AG04449 (cell line): ENCODE measurements at regions of chr10 and their contacts with region 1.

Region 1: DNA sequence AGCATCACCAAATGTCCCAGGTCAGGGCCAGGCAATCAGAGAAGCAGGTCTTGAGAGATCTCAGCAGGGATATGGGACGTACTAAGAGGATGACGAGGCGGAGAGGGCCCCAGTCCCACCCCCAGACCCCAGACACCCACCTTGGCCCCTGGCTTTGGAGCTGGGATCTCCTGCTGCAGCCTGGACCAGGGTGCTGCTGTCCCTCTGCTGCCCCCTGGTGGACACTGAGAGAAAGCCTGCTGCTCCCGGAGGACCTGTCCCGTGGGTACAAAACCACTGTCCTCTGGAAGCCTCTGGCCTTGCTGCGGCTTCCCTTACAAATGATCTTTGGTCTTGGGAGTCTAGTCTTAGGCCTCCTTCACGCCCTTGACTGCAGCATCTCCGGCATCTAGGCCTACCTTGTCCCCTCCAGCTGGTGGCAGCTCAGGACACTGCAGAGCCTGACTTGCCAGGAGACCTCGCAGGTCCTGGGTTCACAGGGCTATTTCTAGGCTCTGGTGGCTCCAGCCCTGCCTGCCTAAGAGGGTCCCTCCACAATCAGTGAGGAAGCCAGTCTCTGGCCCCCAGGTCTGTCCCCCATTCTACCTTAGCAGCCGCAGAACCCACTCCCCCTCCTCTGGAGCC is 97.1 kb downstream of the RGS10 start:
- DNase-seq: peak; percentile 16
- H3K4me3 ChIP-seq: no peak overlapping the region
- CTCF ChIP-seq: peak; percentile 93

Region 2: GRCh38 chr10:119416855-119417254 is 28.6 kb before region 1 on chr10:
- CTCF ChIA-PET with region 1: interaction called, 30 read pairs
- POLR2A ChIA-PET with region 1: no interaction called
- DNase-seq: no peak
- H3K4me3 ChIP-seq: no peak overlapping the region
- CTCF ChIP-seq: peak; percentile 84

Region 3: DNA sequence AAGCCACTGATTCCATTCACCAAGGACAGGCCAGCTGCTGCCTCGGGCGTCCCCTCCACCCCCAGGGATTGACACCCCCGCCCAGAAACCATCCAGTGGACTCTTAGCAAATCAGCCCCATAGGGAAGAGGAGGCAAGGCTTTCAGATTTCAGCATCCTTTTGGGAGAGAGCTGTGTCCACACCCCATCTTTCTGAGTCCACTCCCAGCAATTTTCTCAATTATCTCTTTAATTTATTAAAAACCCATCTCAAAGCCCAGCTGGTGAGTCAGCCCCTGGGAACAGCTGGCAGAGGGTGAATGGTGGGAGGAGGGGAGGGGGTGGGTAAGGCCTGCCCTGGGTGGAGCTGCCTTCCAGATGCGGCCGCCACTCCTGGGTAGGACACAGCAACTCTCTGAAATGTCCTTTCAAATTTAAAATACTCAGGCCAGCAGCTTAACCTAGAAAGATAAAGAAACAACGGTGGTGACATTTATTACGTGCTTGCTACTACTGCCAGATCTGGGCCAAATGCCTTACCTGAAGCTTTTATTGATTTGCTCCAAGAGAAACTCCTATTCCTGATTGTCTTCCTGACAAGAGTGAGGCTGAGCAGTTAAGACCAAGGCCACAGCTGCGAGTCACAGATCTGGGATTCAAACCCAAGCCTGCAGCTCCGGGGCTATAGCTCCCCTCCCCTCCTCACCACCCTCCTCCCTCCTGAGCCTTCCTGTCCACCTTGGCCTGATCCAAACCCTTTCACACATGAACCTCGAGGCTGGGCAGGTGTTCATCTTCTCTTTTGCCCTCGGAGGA is 23.3 kb before region 1 on chr10:
- CTCF ChIA-PET with region 1: interaction called, 30 read pairs
- POLR2A ChIA-PET with region 1: no interaction called
- DNase-seq: no peak
- H3K4me3 ChIP-seq: no peak overlapping the region
- CTCF ChIP-seq: no peak

Region 4: GRCh38 chr10:119428789-119429188 is 16.6 kb before region 1 on chr10:
- CTCF ChIA-PET with region 1: interaction called, 75 read pairs
- POLR2A ChIA-PET with region 1: no interaction called
- DNase-seq: peak; percentile 46
- H3K4me3 ChIP-seq: no peak overlapping the region
- CTCF ChIP-seq: peak; percentile 25

Region 5: GRCh38 chr10:119457966-119458766 is 12.7 kb after region 1 on chr10:
- CTCF ChIA-PET with region 1: interaction called, 35 read pairs
- POLR2A ChIA-PET with region 1: no interaction called
- DNase-seq: no peak
- H3K4me3 ChIP-seq: no peak overlapping the region
- CTCF ChIP-seq: no peak

Region 6: DNA sequence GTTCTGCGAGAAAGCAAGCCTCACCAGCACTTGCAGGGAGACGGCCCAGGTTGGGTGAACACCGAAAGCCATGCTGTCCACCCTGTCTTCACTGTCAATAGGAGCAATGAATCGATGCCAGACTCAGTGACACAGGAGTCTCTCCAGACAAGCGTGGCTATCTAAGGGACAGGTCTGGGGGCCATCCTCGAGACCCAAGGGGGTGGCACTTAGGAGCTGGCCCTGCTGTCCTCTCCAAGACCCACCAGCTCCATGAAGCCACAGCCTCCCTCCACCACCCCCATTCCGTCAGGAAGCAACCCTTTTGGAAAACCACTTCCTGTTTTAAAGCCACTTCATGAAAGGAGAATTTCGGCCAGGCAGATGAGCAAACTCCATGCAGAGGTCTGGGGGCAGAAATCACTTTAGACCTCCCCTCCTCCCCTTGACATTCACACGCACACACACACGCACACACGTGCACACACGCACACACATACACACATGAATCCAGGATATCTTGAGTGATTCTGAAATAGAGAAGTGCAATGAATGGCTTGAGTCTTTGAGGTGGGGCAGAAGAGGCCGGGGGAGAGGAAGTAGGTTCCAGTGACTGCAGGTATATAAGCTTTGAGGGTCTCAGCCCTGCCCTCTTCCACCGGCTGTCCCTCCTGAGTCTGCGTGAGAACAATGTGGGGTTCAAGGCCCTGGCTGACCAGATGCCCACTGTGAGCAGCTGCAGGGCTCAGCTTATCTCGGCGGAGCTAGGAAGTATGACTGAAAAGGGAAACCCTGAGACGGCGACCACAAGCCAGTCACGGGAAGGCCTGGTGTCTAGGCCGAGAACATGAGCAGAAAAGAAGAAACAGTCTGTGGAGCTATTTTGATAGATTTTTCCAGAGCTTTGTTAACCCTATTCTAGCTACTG is 72.1 kb after region 1 on chr10:
- CTCF ChIA-PET with region 1: no interaction called
- POLR2A ChIA-PET with region 1: no interaction called
- DNase-seq: no peak
- H3K4me3 ChIP-seq: no peak overlapping the region
- CTCF ChIP-seq: no peak